ENCODE measurements at regions of chr16 and their contacts with region 1.

Region 1: GRCh38 chr16:58589326-58589905 is 40.2 kb downstream of the CNOT1 start:
- DNase-seq: no peak
- H3K4me3 ChIP-seq: no peak overlapping the region
- H3K27ac ChIP-seq: no peak overlapping the region
- H3K4me1 ChIP-seq: no peaks in the 10 kb centered on the region
- H3K27me3 ChIP-seq: no peaks in the 10 kb centered on the region
- CTCF ChIP-seq: no peak
- EP300 ChIP-seq: no peak
- POLR2A ChIP-seq: no peak
- RAD21 ChIP-seq: no peak

Region 2: DNA sequence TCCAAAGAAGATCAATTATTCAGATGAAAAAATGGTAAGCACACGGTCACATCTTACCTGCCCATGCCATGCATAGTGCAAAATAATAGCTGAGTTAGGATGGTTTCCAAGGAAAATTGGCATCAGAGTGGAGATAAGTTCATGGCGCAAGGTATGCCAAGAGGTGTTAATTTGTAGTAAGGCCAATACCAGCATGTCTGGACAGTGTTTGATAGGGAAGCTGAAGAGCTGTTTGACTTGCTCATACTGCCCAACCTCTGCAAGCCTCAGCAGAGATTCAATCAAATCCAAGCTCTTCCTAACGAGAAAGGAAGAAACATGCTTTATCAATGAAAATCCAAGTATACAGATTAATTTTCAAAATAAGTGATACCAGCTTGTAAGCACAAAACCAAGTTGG is 10.8 kb before region 1 on chr16:
- CTCF ChIA-PET with region 1: interaction called, 11 read pairs
- POLR2A ChIA-PET with region 1: interaction called, 4 read pairs
- DNase-seq: no peak
- H3K4me3 ChIP-seq: no peak overlapping the region
- H3K27ac ChIP-seq: no peak overlapping the region
- H3K4me1 ChIP-seq: no peaks in the 10 kb centered on the region
- H3K27me3 ChIP-seq: no peaks in the 10 kb centered on the region
- CTCF ChIP-seq: no peak
- EP300 ChIP-seq: no peak
- POLR2A ChIP-seq: no peak
- RAD21 ChIP-seq: no peak

Region 3: DNA sequence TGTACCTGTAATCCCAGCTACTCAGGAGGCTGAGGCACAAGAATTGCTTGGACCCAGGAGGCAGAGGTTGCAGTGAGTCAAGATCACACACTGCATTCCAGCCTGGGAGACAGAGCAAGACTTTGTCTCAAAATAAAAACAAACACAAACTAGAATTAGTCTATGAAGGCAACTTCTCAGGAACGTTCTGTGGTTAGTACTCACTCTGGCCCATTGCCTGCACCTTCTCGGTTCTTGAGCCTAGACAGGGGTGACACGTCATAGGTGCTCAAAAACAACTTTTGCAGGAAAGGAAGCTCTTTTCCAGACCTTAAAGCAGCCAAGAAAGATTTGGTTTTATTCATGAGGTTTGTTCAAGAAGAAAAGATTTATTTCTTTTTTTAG is 62.5 kb after region 1 on chr16:
- CTCF ChIA-PET with region 1: no interaction called
- POLR2A ChIA-PET with region 1: no interaction called
- DNase-seq: no peak
- H3K4me3 ChIP-seq: no peak overlapping the region
- H3K27ac ChIP-seq: no peak overlapping the region
- H3K4me1 ChIP-seq: peaks cover 0 to 4% (median 2%) of the 10 kb centered on the region in 4 experiments; a peak in 4 of 7 replicates
- H3K27me3 ChIP-seq: no peaks in the 10 kb centered on the region
- CTCF ChIP-seq: no peak
- EP300 ChIP-seq: no peak
- POLR2A ChIP-seq: no peak
- RAD21 ChIP-seq: no peak

Region 4: DNA sequence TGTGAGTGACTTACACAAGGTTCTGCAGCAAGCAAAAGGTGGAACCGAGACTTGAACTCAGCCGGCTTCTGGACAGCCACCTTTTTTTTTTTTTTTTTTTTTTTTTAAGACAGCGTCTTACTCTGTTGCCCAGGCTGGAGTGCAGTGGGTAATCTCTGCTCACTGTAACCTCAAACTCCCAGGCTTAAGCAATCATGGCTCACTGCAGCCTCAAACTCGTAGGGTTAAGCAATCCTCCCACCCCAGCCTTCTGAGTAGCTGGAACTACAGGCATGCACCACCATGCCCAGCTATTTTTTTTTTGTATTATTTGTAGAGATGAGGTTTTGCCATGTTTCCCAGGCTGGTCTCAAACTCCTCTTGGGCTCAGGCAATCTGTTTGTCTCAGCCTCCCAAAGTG is 199.9 kb after region 1 on chr16:
- CTCF ChIA-PET with region 1: no interaction called
- POLR2A ChIA-PET with region 1: no interaction called
- DNase-seq: no peak
- H3K4me3 ChIP-seq: no peak overlapping the region
- H3K27ac ChIP-seq: no peak overlapping the region
- H3K4me1 ChIP-seq: no peaks in the 10 kb centered on the region; a peak in 1 of 7 replicates
- H3K27me3 ChIP-seq: no peaks in the 10 kb centered on the region
- CTCF ChIP-seq: no peak
- EP300 ChIP-seq: no peak
- POLR2A ChIP-seq: no peak
- RAD21 ChIP-seq: no peak

Measured in H1 (cell line).